ENCODE measurements at regions of chr10 and their contacts with region 1.

Region 1: DNA sequence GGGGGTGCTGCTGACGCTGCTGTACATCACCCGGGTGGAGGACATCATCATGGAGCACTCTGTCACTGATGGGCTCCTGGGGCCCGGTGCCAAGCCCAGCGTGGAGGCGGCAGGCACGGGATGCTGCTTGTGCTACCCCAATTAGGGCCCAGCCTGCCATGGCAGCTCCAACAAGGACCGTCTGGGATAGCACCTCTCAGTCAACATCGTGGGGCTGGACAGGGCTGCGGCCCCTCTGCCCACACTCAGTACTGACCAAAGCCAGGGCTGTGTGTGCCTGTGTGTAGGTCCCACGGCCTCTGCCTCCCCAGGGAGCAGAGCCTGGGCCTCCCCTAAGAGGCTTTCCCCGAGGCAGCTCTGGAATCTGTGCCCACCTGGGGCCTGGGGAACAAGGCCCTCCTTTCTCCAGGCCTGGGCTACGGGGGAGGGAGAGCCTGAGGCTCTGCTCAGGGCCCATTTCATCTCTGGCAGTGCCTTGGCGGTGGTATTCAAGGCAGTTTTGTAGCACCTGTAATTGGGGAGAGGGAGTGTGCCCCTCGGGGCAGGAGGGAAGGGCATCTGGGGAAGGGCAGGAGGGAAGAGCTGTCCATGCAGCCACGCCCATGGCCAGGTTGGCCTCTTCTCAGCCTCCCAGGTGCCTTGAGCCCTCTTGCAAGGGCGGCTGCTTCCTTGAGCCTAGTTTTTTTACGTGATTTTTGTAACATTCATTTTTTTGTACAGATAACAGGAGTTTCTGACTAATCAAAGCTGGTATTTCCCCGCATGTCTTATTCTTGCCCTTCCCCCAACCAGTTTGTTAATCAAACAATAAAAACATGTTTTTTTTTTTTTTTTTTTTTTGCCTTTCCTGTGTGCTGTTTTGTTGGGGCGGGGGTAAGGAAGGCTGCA is 55.8 kb downstream of the TSPAN15 start:
- DNase-seq: no peak
- H3K4me3 ChIP-seq: peak overlapping the region in 1 of 4 donors; percentile 39
- H3K27ac ChIP-seq: no peak overlapping the region
- H3K4me1 ChIP-seq: no peaks in the 10 kb centered on the region
- H3K27me3 ChIP-seq: no peaks in the 10 kb centered on the region
- CTCF ChIP-seq: no peak
- POLR2A ChIP-seq: no peak

Region 2: GRCh38 chr10:69237528-69238159 is 269.4 kb before region 1 on chr10:
- intact Hi-C with region 1: loop called in 1 of 2 experiments (anchors 5 kb)
- DNase-seq: peak; percentile 77 to 96 (median 88)
- H3K4me3 ChIP-seq: no peak overlapping the region
- H3K27ac ChIP-seq: no peak overlapping the region
- H3K4me1 ChIP-seq: peaks cover 0 to 3% of the 10 kb centered on the region in 2 donors
- H3K27me3 ChIP-seq: no peaks in the 10 kb centered on the region
- CTCF ChIP-seq: peak; percentile 87 to 99 (median 96)
- POLR2A ChIP-seq: no peak

Region 3: GRCh38 chr10:69413221-69413865 is 93.7 kb before region 1 on chr10:
- intact Hi-C with region 1: loop called in 1 of 2 experiments (anchors 5 kb)
- DNase-seq: peak; percentile 41 to 80 (median 56)
- H3K4me3 ChIP-seq: no peak overlapping the region
- H3K27ac ChIP-seq: no peak overlapping the region
- H3K4me1 ChIP-seq: peaks cover 0 to 8% of the 10 kb centered on the region in 2 donors
- H3K27me3 ChIP-seq: no peaks in the 10 kb centered on the region
- CTCF ChIP-seq: peak; percentile 30 to 56 (median 50)
- POLR2A ChIP-seq: no peak

Region 4: DNA sequence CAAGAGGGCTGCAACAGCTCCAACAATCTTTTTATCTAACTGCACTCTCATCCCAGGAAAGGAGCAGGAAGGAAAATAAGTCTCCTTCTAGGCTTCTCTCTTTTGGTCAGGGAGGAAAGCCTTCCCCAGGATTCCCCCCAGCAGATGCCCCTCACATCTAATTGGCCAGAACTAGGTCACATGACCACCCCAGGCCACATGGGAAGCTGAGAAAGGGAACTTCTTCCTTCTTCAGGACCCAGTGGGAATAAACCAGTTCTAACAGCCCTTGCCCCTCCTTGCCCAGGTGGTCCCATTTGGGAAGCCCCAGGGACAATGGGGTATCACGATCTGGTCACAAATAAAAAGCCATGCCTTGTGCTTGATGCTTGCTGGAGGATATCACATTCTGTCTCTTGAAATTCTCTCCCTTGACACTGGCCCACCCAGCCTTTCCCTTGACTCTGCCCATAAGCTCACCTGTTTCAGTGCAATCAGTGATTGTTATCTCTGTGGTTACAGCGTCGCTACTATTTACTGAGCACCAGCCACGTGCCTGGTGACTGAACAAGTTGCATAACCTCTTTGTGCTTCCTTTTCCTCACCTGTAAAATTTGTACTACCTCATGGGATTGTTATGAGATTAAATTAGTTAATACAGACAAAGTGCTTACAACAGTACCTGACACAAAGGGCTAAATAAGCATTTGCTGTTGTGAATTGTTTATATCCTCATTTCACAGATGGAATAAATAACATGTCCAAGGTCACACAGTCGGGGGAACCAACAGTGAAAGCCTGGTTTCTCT is 81.4 kb before region 1 on chr10:
- intact Hi-C with region 1: loop called (anchors 5 kb)
- DNase-seq: no peak
- H3K4me3 ChIP-seq: no peak overlapping the region
- H3K27ac ChIP-seq: no peak overlapping the region
- H3K4me1 ChIP-seq: no peaks in the 10 kb centered on the region
- H3K27me3 ChIP-seq: no peaks in the 10 kb centered on the region
- CTCF ChIP-seq: no peak
- POLR2A ChIP-seq: no peak

Region 5: GRCh38 chr10:69600761-69601330 is 93.8 kb after region 1 on chr10:
- intact Hi-C with region 1: no loop called
- DNase-seq: no peak
- H3K4me3 ChIP-seq: no peak overlapping the region
- H3K27ac ChIP-seq: no peak overlapping the region
- H3K4me1 ChIP-seq: no peaks in the 10 kb centered on the region
- H3K27me3 ChIP-seq: peaks cover 18% of the 10 kb centered on the region
- CTCF ChIP-seq: no peak
- POLR2A ChIP-seq: no peak

Measured in adrenal gland (tissue), 19 donors.